Aorta (tissue), 5 donors: ENCODE measurements at regions of chr17 and their contacts with region 1.

Region 1: DNA sequence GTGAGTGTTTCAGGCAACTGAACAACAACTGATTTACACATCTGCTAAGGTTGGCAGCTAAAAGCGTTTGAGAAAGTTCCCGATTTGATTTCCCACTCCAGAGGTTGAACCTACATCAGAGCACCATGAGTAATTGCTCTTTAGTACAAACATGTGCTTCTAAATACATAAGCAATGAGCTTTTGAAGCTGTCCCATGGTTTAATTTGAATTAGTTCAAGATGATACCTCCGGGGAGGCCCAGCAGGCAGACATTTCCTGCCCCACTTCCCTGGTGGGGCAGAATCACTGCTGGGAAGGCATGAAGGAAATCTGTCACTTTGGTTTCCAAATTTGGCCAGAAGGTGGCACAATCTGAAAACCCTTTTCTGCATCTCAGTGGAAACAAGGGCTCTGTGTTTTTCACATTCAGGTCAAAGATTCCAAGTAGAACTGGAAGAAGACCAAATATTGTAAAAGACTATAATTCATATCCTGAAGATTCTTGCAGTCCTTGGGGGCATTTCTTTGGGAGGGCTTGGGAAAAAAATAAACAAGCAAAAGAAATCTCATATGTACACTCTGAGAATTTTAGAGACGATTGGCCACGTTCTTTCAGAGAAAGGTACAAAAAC is 176.2 kb upstream of the FAM20A start:
- DNase-seq: peak in 1 of 2 donors; percentile 47
- ATAC-seq: peak; percentile 86
- H3K4me3 ChIP-seq: no peak overlapping the region
- H3K27ac ChIP-seq: no peak overlapping the region
- H3K4me1 ChIP-seq: no peaks in the 10 kb centered on the region
- H3K27me3 ChIP-seq: no peaks in the 10 kb centered on the region

Region 2: GRCh38 chr17:68972119-68972704 is 194.9 kb after region 1 on chr17:
- intact Hi-C with region 1: loop called (anchors 5 kb)
- DNase-seq: no peak
- ATAC-seq: no peak
- H3K4me3 ChIP-seq: no peak overlapping the region
- H3K27ac ChIP-seq: no peak overlapping the region
- H3K4me1 ChIP-seq: no peaks in the 10 kb centered on the region
- H3K27me3 ChIP-seq: no peaks in the 10 kb centered on the region

Region 3: DNA sequence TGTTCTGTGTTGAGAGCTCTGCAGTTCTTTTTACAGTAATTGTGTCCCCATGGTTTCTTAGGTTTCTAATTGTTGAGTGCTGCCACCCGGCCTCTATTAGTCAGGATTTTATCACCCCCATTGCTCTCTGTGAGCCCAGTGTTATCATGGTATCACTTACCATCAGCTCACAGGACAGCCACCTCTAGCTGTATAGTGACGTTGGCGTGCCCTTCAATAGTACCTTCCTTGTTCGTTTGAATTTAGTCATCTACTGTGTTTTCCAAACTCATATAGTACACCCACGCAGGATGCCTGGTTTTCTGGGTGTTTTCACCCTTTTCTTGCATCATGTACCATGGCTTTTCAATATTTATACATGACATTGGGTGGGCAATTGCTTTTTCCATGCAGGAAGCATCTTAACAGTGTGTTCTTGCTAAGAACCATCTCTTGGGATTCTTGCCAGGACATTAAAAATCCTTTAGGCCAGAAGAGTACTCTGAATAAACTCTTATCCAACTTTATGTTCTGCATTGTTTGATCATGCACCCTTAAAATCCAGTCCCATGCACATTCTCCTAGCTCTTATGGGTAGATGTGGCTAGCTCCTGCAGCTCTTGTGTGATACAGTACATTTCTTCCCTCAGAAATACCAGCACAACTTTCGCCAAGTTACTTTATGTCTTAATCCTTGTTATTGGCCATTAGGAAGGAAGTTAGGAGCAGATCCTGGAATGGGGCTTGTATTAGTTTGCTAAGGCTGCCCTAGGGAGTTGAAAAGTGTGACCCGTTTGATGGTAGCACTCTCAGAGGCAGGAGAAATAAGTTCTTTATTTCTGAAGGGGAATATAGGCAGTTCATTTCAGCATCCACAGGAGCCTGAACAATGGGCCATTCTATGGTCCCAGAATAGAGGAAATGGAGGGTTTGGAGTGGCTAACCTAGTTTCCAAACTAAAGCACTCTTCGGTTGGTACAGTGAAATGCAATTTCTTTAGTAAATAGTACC is 462.6 kb after region 1 on chr17:
- intact Hi-C with region 1: loop called (anchors 5 kb)
- DNase-seq: no peak
- ATAC-seq: no peak
- H3K4me3 ChIP-seq: no peak overlapping the region
- H3K27ac ChIP-seq: no peak overlapping the region
- H3K4me1 ChIP-seq: no peaks in the 10 kb centered on the region
- H3K27me3 ChIP-seq: no peaks in the 10 kb centered on the region

Region 4: DNA sequence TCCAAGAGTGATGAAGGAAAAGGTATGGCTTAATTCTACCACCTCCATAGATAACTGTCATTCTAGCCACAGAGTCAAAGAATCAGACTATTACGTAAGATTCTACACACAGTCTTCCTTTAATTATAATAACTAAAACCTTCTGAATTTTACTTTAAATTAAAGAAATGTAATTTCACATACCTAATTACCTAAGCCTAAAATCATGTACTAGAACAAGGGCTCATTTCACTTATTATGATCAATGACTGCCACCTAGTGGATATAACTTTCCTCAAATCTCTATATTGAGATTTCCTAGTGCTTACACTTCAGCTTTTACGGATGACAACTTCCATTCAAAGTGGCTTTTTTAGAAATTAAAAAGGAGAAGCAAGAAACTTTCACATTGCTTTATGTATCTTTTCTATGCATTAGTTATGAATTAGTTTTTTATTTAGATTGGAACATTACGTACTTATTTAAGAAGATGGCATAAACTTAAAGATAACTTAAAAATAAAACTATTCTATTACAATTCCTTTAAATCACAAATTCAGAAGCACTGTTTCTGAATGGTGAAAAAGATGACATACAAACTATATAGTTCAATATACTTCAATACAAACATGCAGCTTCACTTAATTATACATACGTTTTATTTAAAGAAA is 469.5 kb after region 1 on chr17:
- intact Hi-C with region 1: loop called (anchors 5 kb)
- DNase-seq: no peak
- ATAC-seq: no peak
- H3K4me3 ChIP-seq: no peak overlapping the region
- H3K27ac ChIP-seq: no peak overlapping the region
- H3K4me1 ChIP-seq: no peaks in the 10 kb centered on the region
- H3K27me3 ChIP-seq: no peaks in the 10 kb centered on the region